ENCODE measurements at regions of chr12 and their contacts with region 1.

Region 1: DNA sequence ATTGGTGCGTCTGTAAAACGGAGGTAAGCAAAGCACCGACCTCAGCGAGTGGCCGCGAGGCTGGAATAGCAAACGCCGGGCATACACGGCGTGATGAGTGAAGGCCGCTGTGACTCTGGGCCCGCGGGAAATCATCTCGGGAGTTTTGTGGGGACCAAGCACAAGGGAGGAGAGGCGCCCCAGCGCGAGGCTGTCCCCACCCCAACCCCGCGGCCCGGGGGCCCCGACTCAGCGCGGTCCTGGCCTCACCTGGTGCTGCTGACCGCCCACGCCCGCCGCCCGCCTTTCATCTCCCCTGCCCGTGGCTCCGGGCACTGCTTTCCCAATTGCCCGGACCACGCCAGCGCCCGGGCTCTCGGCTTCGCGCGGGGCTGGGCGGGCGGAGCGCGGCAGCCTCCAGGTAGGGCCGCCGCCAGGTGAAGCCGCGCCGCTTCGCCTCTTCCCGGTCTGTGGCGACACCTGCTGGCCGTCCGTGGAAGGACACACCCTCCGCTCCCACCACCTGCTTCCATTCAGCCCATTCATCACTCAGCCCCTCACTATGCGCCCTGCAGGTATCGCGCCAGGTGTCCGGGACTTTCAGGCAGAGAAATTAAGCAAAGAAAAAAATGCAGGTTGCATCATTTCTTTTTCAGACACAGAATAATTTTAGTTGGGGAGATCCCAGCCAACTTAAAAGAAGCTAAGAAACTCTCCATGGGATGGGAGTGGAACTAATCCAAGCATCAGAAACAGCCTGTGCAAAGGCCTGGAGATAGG is 360.4 kb downstream of the MED13L start:
- DNase-seq: peak; percentile 9 to 41
- ATAC-seq: peak; percentile 56 to 84
- H3K4me3 ChIP-seq: peak overlapping the region in 1 of 4 donors; percentile 19
- H3K27ac ChIP-seq: no peak overlapping the region
- H3K4me1 ChIP-seq: no peaks in the 10 kb centered on the region
- H3K27me3 ChIP-seq: peaks cover 4 to 16% (median 10%) of the 10 kb centered on the region in 3 donors
- CTCF ChIP-seq: peak; percentile 87 to 96 (median 96)
- POLR2A ChIP-seq: no peak

Region 2: GRCh38 chr12:113965951-113966797 is 1950.9 kb before region 1 on chr12 and contains the start of gene RBM19:
- in situ Hi-C with region 1: loop called in 2 of 4 experiments (anchors 25 kb)
- intact Hi-C with region 1: loop called (anchors 10 kb)
- DNase-seq: peak; percentile 96
- ATAC-seq: peak; percentile 99
- H3K4me3 ChIP-seq: peak within 1 kb of the TSS; percentile 68 to 92 (median 82)
- H3K27ac ChIP-seq: peak within 1 kb of the TSS; percentile 68 to 73 (median 72)
- H3K4me1 ChIP-seq: peaks cover 16% of the 10 kb centered on the region in 2 donors
- H3K27me3 ChIP-seq: no peaks in the 10 kb centered on the region
- CTCF ChIP-seq: peak; percentile 84 to 94 (median 87)
- POLR2A ChIP-seq: peak in 1 of 2 donors; percentile 35
- total RNA-seq, gene RBM19: 21.2 to 28.3 (median 26.8) TPM

Region 3: DNA sequence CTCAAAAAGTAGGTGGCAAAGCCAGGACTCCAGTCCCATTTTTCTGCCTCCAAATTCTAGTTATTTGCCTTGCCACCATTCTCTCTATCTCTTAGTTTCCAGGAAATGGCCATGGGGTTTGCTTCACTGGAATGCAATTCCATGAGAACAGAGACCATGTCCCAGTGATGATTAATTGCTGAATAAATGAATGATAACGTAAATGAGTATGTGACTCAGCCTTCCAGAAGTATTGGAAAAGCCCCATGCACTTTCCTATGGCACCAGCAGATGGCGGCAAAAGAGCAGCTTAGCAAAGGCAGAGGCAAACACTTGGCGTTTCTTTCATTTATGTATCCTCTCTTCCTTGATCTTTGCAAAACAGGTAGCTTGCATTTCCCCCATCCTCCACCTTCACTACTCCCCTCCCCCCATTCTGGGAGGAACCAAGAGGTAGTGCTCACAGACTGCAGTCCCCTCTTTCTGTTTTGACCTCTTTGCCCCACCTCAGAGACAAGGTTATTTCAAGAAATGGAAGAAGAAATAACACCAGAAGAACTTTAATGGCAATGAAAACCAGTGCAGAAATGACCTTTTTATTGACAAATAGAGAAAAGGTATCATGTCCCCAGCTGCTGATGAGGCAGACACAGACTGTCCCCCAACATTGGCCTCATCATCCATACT is 1254.4 kb before region 1 on chr12:
- in situ Hi-C with region 1: loop called (anchors 5 kb)
- intact Hi-C with region 1: loop called (anchors 1 kb)
- DNase-seq: peak; percentile 50 to 63
- ATAC-seq: peak; percentile 52 to 65
- H3K4me3 ChIP-seq: no peak overlapping the region
- H3K27ac ChIP-seq: no peak overlapping the region
- H3K4me1 ChIP-seq: peaks cover 0 to under 1% of the 10 kb centered on the region in 2 donors
- H3K27me3 ChIP-seq: peaks cover 20 to 45% (median 41%) of the 10 kb centered on the region in 3 donors
- CTCF ChIP-seq: peak; percentile 79 to 93 (median 87)
- POLR2A ChIP-seq: no peak

Region 4: GRCh38 chr12:114668151-114668885 is 1248.8 kb before region 1 on chr12:
- in situ Hi-C with region 1: loop called (anchors 5 kb)
- intact Hi-C with region 1: loop called (anchors 1 kb)
- DNase-seq: peak; percentile 63 to 71
- ATAC-seq: peak; percentile 86 to 88
- H3K4me3 ChIP-seq: peak overlapping the region; percentile 52 to 73 (median 60)
- H3K27ac ChIP-seq: peak overlapping the region; percentile 42 to 80 (median 70)
- H3K4me1 ChIP-seq: peaks cover 2 to 4% of the 10 kb centered on the region in 2 donors
- H3K27me3 ChIP-seq: peaks cover 14 to 41% (median 40%) of the 10 kb centered on the region in 3 donors
- CTCF ChIP-seq: peak; percentile 40 to 73 (median 71)
- POLR2A ChIP-seq: no peak

Region 5: GRCh38 chr12:115752913-115753726 is 164.0 kb before region 1 on chr12:
- in situ Hi-C with region 1: loop called in 1 of 4 experiments (anchors 10 kb)
- intact Hi-C with region 1: no loop called
- DNase-seq: peak; percentile 7 to 17
- ATAC-seq: peak; percentile 74 to 85
- H3K4me3 ChIP-seq: no peak overlapping the region
- H3K27ac ChIP-seq: no peak overlapping the region
- H3K4me1 ChIP-seq: peaks cover 0 to 6% of the 10 kb centered on the region in 2 donors
- H3K27me3 ChIP-seq: peaks cover 0 to 13% (median 8%) of the 10 kb centered on the region in 3 donors
- CTCF ChIP-seq: peak; percentile 46 to 71 (median 57)
- POLR2A ChIP-seq: no peak

Region 6: DNA sequence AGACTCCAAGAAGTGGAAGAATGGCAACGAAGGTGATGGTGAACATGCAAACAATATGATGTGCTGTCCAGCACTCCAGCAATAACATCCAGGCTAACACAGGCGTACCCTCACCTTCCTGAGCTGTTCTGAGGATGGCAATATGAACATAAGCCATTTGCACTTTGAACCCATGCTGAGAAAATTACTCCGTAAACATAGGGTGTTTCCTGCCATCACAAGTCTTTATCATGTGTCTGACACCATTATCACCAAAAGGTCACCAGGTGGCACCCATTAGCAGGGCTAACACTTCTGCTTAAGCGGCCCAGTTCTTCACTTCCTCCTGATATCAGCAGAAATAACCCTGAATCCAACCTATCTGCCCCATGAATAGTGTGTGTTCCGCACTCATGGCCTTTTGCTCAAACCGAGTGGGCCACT is 122.4 kb before region 1 on chr12:
- in situ Hi-C with region 1: no loop called
- intact Hi-C with region 1: loop called (anchors 10 kb)
- DNase-seq: no peak
- ATAC-seq: no peak
- H3K4me3 ChIP-seq: no peak overlapping the region
- H3K27ac ChIP-seq: no peak overlapping the region
- H3K4me1 ChIP-seq: no peaks in the 10 kb centered on the region
- H3K27me3 ChIP-seq: no peaks in the 10 kb centered on the region
- CTCF ChIP-seq: no peak
- POLR2A ChIP-seq: no peak

Region 7: GRCh38 chr12:116194935-116195431 is 277.9 kb after region 1 on chr12:
- in situ Hi-C with region 1: no loop called
- intact Hi-C with region 1: no loop called
- DNase-seq: no peak
- ATAC-seq: no peak
- H3K4me3 ChIP-seq: no peak overlapping the region
- H3K27ac ChIP-seq: no peak overlapping the region
- H3K4me1 ChIP-seq: peaks cover 59 to 83% of the 10 kb centered on the region in 2 donors
- H3K27me3 ChIP-seq: no peaks in the 10 kb centered on the region
- CTCF ChIP-seq: no peak
- POLR2A ChIP-seq: no peak